Posterior vena cava (tissue), 2 donors: ENCODE measurements at regions of chr21 and their contacts with region 1.

Region 1: GRCh38 chr21:22925032-22925431 is 1926.8 kb downstream of the NCAM2 start:
- DNase-seq: no peak

Region 2: GRCh38 chr21:21673959-21674358 is 1251.1 kb before region 1 on chr21:
- intact Hi-C with region 1: no loop called
- DNase-seq: no peak

Region 3: GRCh38 chr21:23732776-23733175 is 807.7 kb after region 1 on chr21:
- intact Hi-C with region 1: loop called in 1 of 2 experiments (anchors 10 kb)
- DNase-seq: no peak